ENCODE measurements at regions of chr2 and their contacts with region 1.

Region 1: GRCh38 chr2:99559075-99559662 is 69.4 kb upstream of the REV1 start:
- H3K4me3 Mint-ChIP-seq: no peak overlapping the region
- H3K27ac Mint-ChIP-seq: no peak overlapping the region
- H3K4me1 Mint-ChIP-seq: peaks cover 8% of the 10 kb centered on the region
- H3K27me3 Mint-ChIP-seq: no peaks in the 10 kb centered on the region

Region 2: GRCh38 chr2:99297994-99298393 is 261.2 kb before region 1 on chr2:
- intact Hi-C with region 1: no loop called
- H3K4me3 Mint-ChIP-seq: no peak overlapping the region
- H3K27ac Mint-ChIP-seq: no peak overlapping the region
- H3K4me1 Mint-ChIP-seq: no peaks in the 10 kb centered on the region
- H3K27me3 Mint-ChIP-seq: no peaks in the 10 kb centered on the region

Region 3: GRCh38 chr2:99818842-99819241 is 259.7 kb after region 1 on chr2:
- intact Hi-C with region 1: loop called (anchors 5 kb)
- H3K4me3 Mint-ChIP-seq: no peak overlapping the region
- H3K27ac Mint-ChIP-seq: no peak overlapping the region
- H3K4me1 Mint-ChIP-seq: peaks cover 17% of the 10 kb centered on the region
- H3K27me3 Mint-ChIP-seq: no peaks in the 10 kb centered on the region

Region 4: DNA sequence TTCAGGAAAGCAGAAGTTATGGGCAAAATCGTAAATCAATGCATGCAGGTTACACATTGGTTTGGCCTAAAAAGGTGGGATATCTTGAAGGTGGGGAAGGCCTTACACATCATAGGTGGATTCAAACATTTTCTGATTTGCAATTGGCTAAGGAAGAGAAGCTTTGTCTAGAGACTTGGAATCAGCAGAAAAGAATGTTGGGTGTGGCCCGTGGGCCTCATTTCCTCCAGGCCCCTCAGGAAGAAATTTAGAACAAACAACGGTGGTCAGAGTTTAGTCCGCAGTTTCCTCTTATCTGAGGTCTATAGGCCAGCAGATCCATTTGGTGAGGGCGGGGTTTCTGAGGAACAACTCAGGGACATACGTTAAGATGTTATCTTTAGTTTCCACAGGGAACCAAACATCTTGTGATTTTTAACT is 634.1 kb after region 1 on chr2:
- intact Hi-C with region 1: loop called (anchors 5 kb)
- H3K4me3 Mint-ChIP-seq: no peak overlapping the region
- H3K27ac Mint-ChIP-seq: peak overlapping the region; percentile 49
- H3K4me1 Mint-ChIP-seq: peaks cover 37% of the 10 kb centered on the region
- H3K27me3 Mint-ChIP-seq: no peaks in the 10 kb centered on the region

Region 5: DNA sequence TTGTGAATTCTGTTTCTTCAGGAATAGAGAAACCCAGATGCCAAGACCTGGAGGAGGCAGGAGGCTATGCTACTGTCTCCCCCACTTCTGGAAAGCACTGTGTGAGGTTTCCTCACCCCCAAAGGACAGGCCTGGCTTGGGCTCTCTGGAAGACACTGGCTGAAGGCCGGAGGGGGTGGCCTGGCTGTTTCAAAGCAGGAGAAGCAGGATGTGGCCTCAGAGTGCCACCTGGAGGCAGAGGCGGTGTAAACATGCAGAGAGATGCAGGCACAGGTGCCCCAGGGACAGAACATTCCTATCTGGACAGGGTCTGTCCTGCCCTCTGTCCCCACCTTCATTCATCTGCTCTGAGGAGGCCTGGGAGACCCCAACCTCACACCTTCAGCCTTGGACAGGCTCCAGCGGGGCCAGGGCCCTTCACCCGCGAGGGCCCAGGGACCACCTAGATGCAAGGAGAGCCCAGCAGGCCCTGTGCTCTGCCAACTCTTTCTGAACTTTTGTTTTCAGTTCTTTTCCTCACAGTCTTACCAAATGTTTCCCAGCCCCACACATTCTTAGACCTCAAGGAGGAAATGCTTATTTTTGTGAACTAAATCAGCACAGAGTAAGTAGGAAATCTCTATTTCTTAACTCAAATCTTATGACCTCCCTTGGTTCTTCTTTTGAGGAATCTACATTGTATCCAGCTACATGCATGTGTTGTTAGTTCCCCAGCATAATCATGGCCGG is 683.9 kb after region 1 on chr2:
- intact Hi-C with region 1: loop called (anchors 1 kb)
- H3K4me3 Mint-ChIP-seq: no peak overlapping the region
- H3K27ac Mint-ChIP-seq: peak overlapping the region; percentile 64
- H3K4me1 Mint-ChIP-seq: peaks cover 31% of the 10 kb centered on the region
- H3K27me3 Mint-ChIP-seq: peaks cover 4% of the 10 kb centered on the region

Region 6: DNA sequence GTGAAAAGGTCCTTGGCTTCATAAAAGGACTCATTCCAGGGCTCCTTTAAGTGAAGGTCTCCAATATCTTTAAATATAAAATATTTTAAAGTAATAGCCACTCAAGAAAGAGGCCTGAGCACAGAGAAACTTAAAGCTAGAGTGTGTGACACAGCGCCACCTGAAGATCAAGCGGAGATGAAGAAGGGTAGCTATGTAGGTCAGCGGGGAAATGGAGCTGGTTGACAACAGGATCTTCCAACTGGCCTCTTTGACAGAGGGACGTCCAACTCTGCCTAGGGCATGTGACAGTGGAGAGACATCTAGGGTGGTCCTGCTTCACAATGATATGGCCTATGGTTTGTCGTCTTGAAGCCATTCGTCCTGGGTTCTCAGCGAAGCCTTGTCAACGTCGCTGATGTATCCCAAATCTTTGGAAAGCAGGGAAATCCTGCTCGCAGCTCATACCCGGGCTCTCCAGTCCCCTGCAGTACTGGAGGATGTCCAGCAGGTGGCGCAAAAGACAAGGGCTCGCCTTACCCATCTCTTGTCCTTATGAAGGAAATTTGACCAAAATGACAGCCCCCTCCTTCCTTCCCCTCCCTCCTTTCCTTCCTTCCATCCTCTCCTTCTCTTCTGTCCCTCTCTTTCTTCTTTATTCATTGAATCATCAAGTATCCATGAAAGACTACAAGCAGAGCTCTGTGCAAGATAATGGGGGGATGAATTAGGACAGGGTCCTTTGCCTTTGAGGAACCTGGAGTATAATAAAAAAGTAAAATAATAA is 703.6 kb after region 1 on chr2:
- intact Hi-C with region 1: loop called (anchors 2 kb)
- H3K4me3 Mint-ChIP-seq: no peak overlapping the region
- H3K27ac Mint-ChIP-seq: no peak overlapping the region
- H3K4me1 Mint-ChIP-seq: peaks cover 15% of the 10 kb centered on the region
- H3K27me3 Mint-ChIP-seq: no peaks in the 10 kb centered on the region

Region 7: DNA sequence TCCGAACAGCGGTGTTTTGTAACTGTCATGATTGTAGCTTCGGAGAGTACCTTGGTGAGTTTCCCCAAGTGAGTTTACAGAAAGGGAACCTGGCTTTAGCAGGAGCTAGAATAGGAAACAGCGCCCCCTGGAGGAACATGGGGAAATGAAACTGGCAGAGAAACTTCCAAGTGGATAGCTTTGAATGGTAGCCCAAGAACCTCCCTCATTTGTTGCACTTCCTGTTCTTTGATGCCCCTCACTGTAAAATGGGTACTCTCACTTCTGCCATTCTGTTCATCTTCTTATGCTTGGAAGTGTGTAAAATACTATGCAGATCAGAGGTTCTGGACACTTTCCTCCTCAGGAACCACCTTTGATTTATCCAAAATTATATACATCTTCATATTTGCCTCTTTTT is 822.1 kb after region 1 on chr2:
- intact Hi-C with region 1: loop called (anchors 5 kb)
- H3K4me3 Mint-ChIP-seq: no peak overlapping the region
- H3K27ac Mint-ChIP-seq: no peak overlapping the region
- H3K4me1 Mint-ChIP-seq: peaks cover 4% of the 10 kb centered on the region
- H3K27me3 Mint-ChIP-seq: no peaks in the 10 kb centered on the region